Activated CD8-positive, alpha-beta T cell treated with anti-CD3 and anti-CD28 coated beads, Interleukin-2, amount 10 ng/mL, durations not matched to agents 7 days and 5 days (primary cell): ENCODE measurements at regions of chr13 and their contacts with region 1.

Region 1: DNA sequence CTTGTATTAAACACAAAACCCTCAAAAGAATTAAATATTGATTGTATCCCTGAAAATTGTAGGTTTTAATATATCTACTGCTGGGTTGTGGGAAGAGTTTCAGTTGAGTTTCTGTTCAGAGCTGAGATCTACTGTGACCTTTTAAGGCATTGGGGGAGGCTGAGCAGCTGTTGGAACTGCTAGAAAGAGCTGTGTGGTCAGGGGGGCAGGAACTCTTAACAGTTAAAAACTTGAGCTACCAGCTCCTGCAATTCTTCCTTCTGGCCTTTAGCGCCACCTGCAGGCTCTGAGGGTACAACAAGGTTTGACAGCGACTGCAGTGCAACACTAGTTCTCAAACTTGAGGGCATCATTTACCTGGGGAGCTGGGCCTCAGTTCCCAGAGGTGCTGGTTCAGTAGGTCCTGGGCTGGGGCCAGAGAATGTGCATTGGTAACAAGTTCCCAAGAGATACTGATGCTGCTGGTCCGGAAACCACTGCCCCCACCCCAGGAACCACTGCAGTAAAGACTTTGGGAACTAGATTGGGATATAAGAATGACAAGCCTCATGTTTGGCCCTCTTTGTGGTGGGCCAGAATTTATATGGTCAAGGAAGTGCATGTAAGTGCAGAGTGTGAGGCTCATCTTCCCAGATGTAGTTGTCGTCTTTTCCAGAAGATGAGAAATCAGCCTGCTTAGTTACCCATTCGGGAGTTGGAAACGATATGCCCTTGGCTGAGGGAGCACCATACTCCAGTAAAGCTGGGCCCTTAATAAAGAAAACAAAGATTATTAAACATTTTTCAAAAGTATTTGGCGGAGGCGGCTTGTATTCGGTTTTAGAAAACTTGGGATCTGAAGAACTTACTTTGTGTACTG is 2.6 kb downstream of the RNASEH2B start:
- DNase-seq: peak; percentile 98
- ATAC-seq: peak; percentile 73
- H3K4me3 Mint-ChIP-seq: peak overlapping the region; percentile 91
- H3K27ac Mint-ChIP-seq: peak overlapping the region; percentile 96
- H3K4me1 Mint-ChIP-seq: peaks cover 68% of the 10 kb centered on the region
- H3K27me3 Mint-ChIP-seq: no peaks in the 10 kb centered on the region

Region 2: GRCh38 chr13:49976314-49977258 is 935.6 kb before region 1 on chr13:
- CTCF ChIA-PET with region 1: interaction called, 24 read pairs
- POLR2A ChIA-PET with region 1: no interaction called
- DNase-seq: peak; percentile 81
- ATAC-seq: peak; percentile 81
- H3K4me3 Mint-ChIP-seq: no peak overlapping the region
- H3K27ac Mint-ChIP-seq: no peak overlapping the region
- H3K4me1 Mint-ChIP-seq: peaks cover 4% of the 10 kb centered on the region
- H3K27me3 Mint-ChIP-seq: no peaks in the 10 kb centered on the region

Region 3: GRCh38 chr13:50123862-50124536 is 788.2 kb before region 1 on chr13:
- CTCF ChIA-PET with region 1: interaction called, 26 read pairs
- POLR2A ChIA-PET with region 1: interaction called, 29 read pairs
- DNase-seq: peak; percentile 76
- ATAC-seq: peak; percentile 74
- H3K4me3 Mint-ChIP-seq: peak overlapping the region; percentile 84
- H3K27ac Mint-ChIP-seq: peak overlapping the region; percentile 90
- H3K4me1 Mint-ChIP-seq: peaks cover 47% of the 10 kb centered on the region
- H3K27me3 Mint-ChIP-seq: peaks cover 7% of the 10 kb centered on the region

Region 4: DNA sequence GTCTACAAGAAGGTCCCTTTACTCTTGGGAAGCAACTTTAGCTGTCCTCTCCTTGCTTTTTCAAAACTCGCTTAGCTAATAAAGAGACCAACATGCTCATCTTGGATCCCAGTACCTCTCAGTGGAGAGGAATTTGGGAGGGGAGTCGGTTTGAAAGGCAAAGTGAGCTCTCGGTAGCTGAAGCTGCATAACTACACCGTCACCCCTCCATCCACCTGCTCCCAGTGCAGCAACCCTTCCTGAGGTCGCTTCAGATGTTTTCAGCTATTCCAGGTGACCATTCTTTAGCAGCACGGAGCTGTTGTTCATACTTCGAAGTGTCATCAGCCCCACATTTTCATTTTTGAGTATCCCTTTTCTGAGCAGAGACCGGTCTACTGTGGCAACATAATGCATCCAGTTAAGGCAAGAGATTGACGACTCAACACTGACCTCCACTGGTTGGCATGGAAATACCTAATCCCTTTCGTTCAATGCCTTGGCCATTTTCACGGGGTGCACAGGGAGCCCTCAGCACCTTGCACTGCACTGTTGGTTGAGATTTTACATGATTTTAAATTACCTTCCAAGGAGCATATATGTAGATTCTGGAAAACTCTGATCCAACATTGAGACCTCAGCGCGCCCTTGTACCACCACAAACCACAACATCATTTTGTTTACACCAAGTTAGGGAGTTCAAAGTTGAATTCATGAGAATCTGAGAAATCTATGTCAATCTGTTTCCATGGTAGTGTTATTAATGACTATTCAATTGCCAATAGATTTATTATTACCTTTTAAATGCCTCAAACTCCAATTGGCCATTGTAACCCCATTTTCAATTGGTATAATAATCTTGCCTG is 110.9 kb before region 1 on chr13:
- CTCF ChIA-PET with region 1: interaction called, 99 read pairs
- POLR2A ChIA-PET with region 1: interaction called, 13 read pairs
- DNase-seq: peak; percentile 84
- ATAC-seq: peak; percentile 97
- H3K4me3 Mint-ChIP-seq: no peak overlapping the region
- H3K27ac Mint-ChIP-seq: peak overlapping the region; percentile 28
- H3K4me1 Mint-ChIP-seq: peaks cover 26% of the 10 kb centered on the region
- H3K27me3 Mint-ChIP-seq: no peaks in the 10 kb centered on the region

Region 5: DNA sequence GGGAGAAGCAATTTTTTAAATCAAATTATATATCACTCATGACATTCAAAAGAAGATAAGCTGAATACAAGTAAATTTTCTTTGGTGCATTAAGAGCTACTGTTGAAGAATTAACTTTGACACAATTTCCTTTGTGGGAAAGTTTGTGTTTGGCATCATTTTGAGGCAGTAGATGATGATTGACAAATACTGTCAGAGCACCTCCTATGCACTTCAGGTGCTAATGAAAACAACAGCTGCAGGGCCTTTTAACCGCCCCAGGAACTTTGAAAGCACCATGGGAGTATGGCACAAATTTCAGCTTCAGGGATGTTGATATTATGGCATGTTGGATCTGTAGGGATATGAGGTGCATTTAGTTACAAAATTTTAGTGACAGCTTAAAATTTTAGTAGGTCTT is 47.7 kb before region 1 on chr13:
- CTCF ChIA-PET with region 1: interaction called, 12 read pairs
- POLR2A ChIA-PET with region 1: no interaction called
- DNase-seq: no peak
- ATAC-seq: no peak
- H3K4me3 Mint-ChIP-seq: no peak overlapping the region
- H3K27ac Mint-ChIP-seq: no peak overlapping the region
- H3K4me1 Mint-ChIP-seq: no peaks in the 10 kb centered on the region
- H3K27me3 Mint-ChIP-seq: peaks cover 11% of the 10 kb centered on the region

Region 6: DNA sequence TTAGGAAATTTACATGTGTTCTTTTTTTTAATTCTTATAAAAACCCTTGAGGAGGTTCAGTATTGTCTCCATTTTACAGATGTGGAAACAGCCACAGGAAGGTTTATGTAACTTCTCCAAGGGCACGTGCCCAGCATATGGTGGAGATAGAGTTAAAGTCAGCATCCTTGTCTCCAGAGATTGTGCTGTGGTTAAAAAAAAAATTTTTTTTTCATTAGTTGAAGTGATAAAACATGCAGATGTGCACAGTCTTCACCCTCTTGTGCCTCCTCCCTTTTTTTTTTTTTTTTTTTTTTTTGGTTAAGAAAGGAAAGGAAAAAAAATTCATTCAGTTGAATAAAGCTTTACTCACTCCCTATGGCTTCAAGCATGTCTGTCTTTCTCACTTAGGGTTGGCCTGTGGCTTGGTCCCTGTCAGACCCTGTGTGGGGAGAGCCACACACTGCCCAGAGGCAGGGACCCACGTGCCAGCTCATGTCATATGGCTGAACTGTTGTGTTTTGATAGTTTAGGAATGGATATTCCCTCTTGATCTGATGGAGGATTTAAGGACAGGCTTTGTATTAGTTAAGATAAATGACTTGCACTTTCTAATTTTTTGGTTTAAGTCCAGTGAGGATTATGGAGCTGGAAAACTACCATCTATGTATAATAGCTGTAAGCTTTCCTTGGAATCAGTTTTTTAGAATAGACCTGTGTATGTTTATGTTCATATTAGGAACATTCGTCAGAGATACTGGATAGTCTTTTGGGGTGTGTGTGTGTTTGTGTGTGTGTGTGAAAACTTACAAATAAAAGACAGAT is 16.7 kb after region 1 on chr13:
- CTCF ChIA-PET with region 1: interaction called, 10 read pairs
- POLR2A ChIA-PET with region 1: no interaction called
- DNase-seq: no peak
- ATAC-seq: no peak
- H3K4me3 Mint-ChIP-seq: no peak overlapping the region
- H3K27ac Mint-ChIP-seq: no peak overlapping the region
- H3K4me1 Mint-ChIP-seq: peaks cover 16% of the 10 kb centered on the region
- H3K27me3 Mint-ChIP-seq: no peaks in the 10 kb centered on the region